Activated CD4-positive, alpha-beta T cell treated with anti-CD3 and anti-CD28 coated beads, Interleukin-2, amount 10 ng/mL, durations not matched to agents 7 days and 5 days (primary cell): ENCODE measurements at regions of chr16 and their contacts with region 1.

Region 1: GRCh38 chr16:4850211-4850610 is 2.9 kb downstream of the UBN1 start:
- DNase-seq: no peak
- H3K4me3 Mint-ChIP-seq: no peak overlapping the region
- H3K27ac Mint-ChIP-seq: no peak overlapping the region
- H3K4me1 Mint-ChIP-seq: peaks cover 52% of the 10 kb centered on the region
- H3K27me3 Mint-ChIP-seq: no peaks in the 10 kb centered on the region

Region 2: DNA sequence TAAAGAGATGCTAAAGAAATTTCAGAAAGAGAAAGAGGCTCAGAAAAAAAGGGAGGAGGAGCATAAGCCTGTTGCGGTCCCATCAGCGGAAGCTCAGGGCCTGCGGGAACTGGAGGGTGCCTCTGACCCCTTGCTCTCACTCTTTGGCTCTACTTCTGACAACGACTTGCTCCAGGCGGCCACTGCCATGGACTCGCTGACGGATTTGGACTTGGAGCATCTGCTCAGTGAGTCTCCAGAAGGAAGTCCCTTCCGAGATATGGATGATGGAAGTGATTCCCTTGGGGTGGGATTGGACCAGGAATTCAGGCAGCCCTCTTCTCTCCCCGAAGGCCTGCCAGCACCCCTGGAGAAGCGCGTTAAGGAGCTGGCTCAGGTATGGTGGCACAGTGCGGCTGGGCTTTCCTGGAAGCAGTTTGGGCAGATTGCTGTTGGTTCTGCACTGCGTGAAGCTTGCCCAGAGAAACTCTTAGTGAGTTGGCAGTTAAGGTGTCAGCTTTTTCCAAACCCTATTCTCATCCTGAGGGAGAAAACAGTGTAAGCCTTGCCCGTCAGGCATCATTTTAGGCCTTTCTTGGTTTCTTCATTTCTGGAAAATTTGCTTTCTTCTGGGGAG is 10.6 kb after region 1 on chr16:
- CTCF ChIA-PET with region 1: no interaction called
- POLR2A ChIA-PET with region 1: no interaction called
- DNase-seq: no peak
- H3K4me3 Mint-ChIP-seq: no peak overlapping the region
- H3K27ac Mint-ChIP-seq: no peak overlapping the region
- H3K4me1 Mint-ChIP-seq: peaks cover 7% of the 10 kb centered on the region
- H3K27me3 Mint-ChIP-seq: no peaks in the 10 kb centered on the region

Region 3: DNA sequence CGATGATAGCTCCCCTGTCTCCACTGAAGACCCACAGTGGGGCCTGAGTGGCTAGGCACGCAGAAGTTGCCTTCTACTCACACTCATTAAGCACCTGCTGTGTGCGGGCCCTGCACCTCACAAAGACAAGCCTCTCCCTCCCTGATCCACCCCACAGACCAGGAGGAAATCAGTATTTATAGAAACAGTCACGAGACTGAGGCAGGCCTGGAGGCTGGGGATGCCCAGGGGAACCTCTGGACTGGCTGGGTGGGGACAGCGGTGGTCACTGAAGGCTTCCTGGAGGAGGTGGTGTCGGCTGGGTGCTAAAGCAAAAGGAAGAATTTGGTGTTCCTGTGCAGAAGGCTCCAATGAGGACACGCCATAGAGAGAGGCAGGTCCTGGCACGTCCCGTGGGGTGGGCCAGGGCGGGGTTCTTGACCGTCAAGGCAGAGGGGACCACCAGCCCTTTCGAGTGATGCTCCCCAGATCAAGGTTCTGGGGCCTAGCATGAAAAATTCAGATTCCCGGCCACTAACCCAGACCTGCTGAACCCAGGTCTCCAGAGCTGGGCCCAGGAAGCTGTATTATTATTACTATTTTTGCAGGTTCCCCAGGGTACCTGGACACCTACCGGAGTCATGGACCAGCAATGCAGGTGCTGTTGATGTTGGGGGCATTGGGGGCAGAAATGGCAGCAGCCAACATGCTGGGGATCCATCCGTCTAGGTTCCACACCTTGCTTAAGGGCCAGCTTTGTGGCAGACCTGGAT is 63.7 kb after region 1 on chr16:
- CTCF ChIA-PET with region 1: no interaction called
- POLR2A ChIA-PET with region 1: interaction called, 12 read pairs
- DNase-seq: no peak
- H3K4me3 Mint-ChIP-seq: no peak overlapping the region
- H3K27ac Mint-ChIP-seq: no peak overlapping the region
- H3K4me1 Mint-ChIP-seq: no peaks in the 10 kb centered on the region
- H3K27me3 Mint-ChIP-seq: no peaks in the 10 kb centered on the region